ENCODE measurements at regions of chr2 and their contacts with region 1.

Region 1: DNA sequence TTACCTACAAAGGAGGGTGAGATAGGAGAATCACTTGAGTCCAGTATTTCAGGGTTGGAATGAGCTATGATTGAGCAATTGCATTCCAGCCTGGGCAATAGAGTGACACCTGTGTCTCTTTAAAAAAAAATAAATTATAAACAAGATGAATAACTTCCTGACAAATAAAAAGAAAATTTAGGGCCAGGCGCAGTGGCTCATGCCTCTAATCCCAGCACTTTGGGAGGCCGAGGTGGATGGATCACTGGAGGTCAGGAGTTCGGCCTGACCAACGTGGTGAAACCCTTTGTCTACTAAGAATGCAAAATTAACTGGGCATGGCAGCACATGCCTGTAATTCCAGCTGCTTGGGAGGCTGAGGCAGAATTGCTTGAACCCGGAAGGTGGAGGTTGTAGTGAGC is 17.4 kb downstream of the MTA3 start:
- DNase-seq: peak; percentile 35 to 57
- H3K4me3 ChIP-seq: no peak overlapping the region
- H3K4me3 Mint-ChIP-seq: no peak overlapping the region
- H3K27ac Mint-ChIP-seq: peak overlapping the region; percentile 33
- H3K4me1 ChIP-seq: peaks cover 7% of the 10 kb centered on the region; the same call in 1 of the 2 replicates
- H3K4me1 Mint-ChIP-seq: no peaks in the 10 kb centered on the region
- H3K27me3 ChIP-seq: no peaks in the 10 kb centered on the region
- H3K27me3 Mint-ChIP-seq: no peaks in the 10 kb centered on the region
- CTCF ChIP-seq: no peak

Region 2: DNA sequence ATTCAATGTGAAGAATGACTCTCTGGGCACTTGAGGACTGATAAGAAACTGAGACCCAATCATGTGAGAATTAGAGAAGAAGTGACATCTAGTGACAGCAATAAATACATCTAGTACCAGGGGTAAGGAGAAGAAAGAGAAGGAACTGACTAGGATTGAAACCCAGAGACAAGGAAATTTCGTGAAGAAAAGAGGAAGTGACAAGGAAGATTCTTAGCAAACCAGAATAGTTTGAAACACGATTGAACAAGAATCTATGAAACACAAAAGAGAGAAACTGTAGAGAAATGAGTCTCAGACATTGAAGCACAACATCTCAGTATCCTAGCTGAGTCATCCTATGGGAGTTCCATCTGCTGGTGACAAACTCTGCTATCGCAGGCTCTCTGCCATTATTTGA is 1109.9 kb before region 1 on chr2:
- CTCF ChIA-PET with region 1: no interaction called
- POLR2A ChIA-PET with region 1: no interaction called
- intact Hi-C with region 1: no loop called
- DNase-seq: no peak
- H3K4me3 ChIP-seq: no peak overlapping the region
- H3K4me3 Mint-ChIP-seq: no peak overlapping the region
- H3K27ac Mint-ChIP-seq: no peak overlapping the region
- H3K4me1 ChIP-seq: 0 out of 2 replicates have a peak, but pooled peaks cover 6% of the 10 kb centered on the region
- H3K4me1 Mint-ChIP-seq: no peaks in the 10 kb centered on the region
- H3K27me3 ChIP-seq: no peaks in the 10 kb centered on the region
- H3K27me3 Mint-ChIP-seq: peaks cover 5% of the 10 kb centered on the region
- CTCF ChIP-seq: no peak

Region 3: GRCh38 chr2:42494355-42495233 is 91.2 kb before region 1 on chr2:
- CTCF ChIA-PET with region 1: no interaction called
- POLR2A ChIA-PET with region 1: no interaction called
- intact Hi-C with region 1: loop called (anchors 1 kb)
- DNase-seq: peak; percentile 80 to 86
- H3K4me3 ChIP-seq: peak overlapping the region; percentile 48
- H3K4me3 Mint-ChIP-seq: peak overlapping the region; percentile 98
- H3K27ac Mint-ChIP-seq: peak overlapping the region; percentile 21
- H3K4me1 ChIP-seq: no peaks in the 10 kb centered on the region
- H3K4me1 Mint-ChIP-seq: no peaks in the 10 kb centered on the region
- H3K27me3 ChIP-seq: no peaks in the 10 kb centered on the region
- H3K27me3 Mint-ChIP-seq: no peaks in the 10 kb centered on the region
- CTCF ChIP-seq: peak; percentile 91 to 94

Region 4: GRCh38 chr2:42639340-42640077 is 53.7 kb after region 1 on chr2:
- CTCF ChIA-PET with region 1: no interaction called
- POLR2A ChIA-PET with region 1: no interaction called
- intact Hi-C with region 1: no loop called
- DNase-seq: no peak
- H3K4me3 ChIP-seq: no peak overlapping the region
- H3K4me3 Mint-ChIP-seq: no peak overlapping the region
- H3K27ac Mint-ChIP-seq: no peak overlapping the region
- H3K4me1 ChIP-seq: no peaks in the 10 kb centered on the region
- H3K4me1 Mint-ChIP-seq: no peaks in the 10 kb centered on the region
- H3K27me3 ChIP-seq: no peaks in the 10 kb centered on the region
- H3K27me3 Mint-ChIP-seq: no peaks in the 10 kb centered on the region
- CTCF ChIP-seq: no peak

Measured in Caco-2 (cell line).